GM18951 (cell line): ENCODE measurements at regions of chr7 and their contacts with region 1.

Region 1: DNA sequence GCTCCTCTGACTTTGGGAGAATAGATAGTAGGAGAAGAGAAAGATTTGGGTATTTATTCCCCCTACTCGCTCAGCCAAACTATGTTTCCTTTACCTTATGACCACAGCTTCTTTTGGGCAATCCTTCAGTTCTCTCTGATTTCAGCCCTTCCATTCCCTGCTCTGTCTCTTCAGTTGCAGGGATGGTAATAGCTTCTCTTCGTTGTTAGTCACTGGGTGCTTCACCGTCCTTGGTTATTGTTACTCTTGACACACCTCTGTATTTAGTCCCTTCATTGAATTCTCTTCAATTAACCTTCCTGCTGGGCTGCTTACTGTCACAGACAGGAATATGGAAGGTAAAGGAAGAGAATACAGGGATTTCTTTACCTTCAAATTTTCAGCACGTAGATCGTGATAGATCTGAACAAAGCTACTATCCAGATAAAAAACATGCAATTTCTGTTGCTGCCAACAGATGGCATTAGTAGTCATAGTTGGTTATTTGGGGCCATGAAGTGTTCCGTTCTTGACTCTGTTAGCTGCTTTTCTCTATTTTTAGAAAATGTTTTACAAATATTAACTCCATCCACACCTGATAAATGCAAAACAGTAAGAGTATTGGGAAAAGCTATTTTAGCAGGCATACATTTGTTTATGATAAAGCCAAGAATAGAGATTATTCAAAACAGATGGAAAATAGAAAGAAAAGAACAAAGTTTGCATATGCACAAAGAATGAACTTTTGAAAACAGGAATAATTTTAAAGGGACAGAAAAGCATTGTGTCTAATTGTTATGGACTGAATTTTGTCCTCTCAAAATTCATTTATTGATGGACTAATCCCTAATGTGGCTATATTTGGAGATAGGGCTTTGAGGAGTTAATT is 14.0 kb upstream of the PTTG1IP2 start:
- POLR2A ChIP-seq: no peak

Region 2: GRCh38 chr7:90629297-90629918 is 174.0 kb after region 1 on chr7:
- in situ Hi-C with region 1: loop called (anchors 10 kb)
- POLR2A ChIP-seq: no peak

Region 3: GRCh38 chr7:90877201-90877600 is 421.8 kb after region 1 on chr7:
- in situ Hi-C with region 1: no loop called
- POLR2A ChIP-seq: no peak

Region 4: DNA sequence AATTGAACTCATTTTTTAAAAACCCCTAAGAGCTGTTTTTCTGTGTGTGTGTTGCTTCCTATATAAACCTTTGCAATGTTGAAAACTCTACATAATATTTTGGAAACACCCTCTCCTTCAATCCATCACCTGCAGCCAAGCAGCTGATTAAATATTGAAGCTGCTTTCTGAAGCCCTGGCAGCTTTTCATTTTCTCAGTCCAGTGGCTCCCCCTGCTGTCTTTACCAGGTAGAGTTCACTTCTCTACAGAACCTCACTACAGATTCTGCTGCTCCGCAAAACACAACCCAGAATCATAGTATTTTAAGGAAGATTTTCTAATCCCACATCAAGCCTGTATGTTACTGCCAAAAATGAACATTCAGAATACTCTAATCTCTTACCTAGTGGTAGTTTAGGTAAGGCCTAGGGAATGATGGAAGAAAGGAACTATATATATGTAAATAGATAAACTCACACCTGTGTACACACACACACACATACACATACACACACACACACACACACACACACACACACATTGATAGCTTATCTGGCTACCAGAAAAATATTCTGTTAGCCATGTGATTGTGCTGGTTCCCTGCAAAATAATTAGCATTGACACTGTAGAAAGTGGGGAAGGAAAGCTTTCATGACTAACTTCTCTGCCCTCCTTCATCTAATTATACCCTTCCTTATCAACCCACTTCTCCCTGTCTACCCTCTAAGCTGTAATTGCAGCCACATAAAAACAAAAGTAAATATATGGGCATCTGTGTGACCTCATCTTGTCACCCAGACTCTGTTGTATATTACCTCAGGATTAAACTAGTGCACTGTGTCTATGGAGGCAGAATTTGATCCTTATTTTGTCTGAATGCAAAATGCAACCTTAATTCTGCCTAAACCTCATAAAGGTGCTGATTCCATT is 579.3 kb after region 1 on chr7:
- in situ Hi-C with region 1: loop called (anchors 25 kb)
- POLR2A ChIP-seq: no peak